RWPE1 (cell line): ENCODE measurements at regions of chr18 and their contacts with region 1.

Region 1: GRCh38 chr18:6807515-6808257 is 78.2 kb downstream of the ARHGAP28 start:
- DNase-seq: no peak
- H3K27ac ChIP-seq: no peak overlapping the region
- CTCF ChIP-seq: no peak

Region 2: GRCh38 chr18:6759579-6759978 is 48.1 kb before region 1 on chr18:
- CTCF ChIA-PET with region 1: interaction called, 10 read pairs
- POLR2A ChIA-PET with region 1: no interaction called
- DNase-seq: no peak
- H3K27ac ChIP-seq: no peak overlapping the region
- CTCF ChIP-seq: no peak